Activated naive CD8-positive, alpha-beta T cell treated with anti-CD3 and anti-CD28 coated beads, Interleukin-2, amount 10 ng/mL, durations not matched to agents 7 days and 5 days (primary cell): ENCODE measurements at regions of chr18 and their contacts with region 1.

Region 1: GRCh38 chr18:12883684-12884405 is at the start of gene PTPN2:
- DNase-seq: peak; percentile 97
- ATAC-seq: peak; percentile 92
- H3K4me3 Mint-ChIP-seq: peak within 1 kb of the TSS; percentile 90
- H3K27ac Mint-ChIP-seq: peak within 1 kb of the TSS; percentile 96
- H3K4me1 Mint-ChIP-seq: peaks cover 52% of the 10 kb centered on the region
- H3K27me3 Mint-ChIP-seq: no peaks in the 10 kb centered on the region
- total RNA-seq, gene PTPN2: 64.9 to 68.1 TPM

Region 2: DNA sequence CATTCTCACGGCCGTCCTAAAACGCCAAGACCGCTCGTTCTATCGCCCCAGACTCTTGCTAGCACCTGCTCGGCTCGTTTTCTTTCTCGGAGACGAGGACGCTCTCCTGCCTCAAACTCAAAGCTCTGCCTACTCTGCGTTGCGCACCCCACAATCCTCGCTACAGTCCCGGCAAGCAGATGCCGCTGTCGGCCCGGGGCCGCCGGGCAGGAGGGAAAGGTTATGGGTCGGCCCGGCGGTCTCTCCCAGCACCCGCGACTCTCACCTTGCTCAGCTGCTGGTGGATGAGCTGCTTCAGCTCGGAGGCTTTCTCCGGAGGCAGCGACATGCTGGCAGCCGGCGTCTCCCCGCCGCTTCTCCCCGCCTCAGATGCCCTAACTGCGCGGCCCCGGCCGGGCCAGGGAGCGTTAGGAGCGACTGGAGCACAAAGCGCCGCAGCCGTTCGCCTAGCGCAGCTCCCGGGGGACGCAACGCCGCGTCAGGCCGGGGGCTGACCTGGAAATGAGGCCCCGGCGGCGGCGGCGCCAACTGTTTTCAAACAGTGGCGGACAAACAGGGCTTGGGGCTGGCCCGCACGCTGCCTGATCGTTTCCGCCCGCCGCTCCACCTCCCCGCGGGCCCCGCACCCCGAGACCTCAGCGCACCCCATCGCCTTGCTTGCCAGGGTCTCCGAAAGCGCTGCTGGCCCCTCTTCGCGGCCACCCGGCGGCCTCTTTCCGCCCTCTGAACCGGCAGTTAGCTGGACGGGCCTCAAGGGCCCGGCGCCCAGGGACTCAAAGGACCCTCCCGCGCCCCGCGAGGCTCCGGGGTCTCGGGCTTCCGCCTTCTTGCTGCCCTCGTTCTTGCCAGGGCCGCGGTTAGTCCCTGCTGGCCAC is 181.4 kb before region 1 on chr18 and contains the starts of genes CEP76 and PSMG2:
- POLR2A ChIA-PET with region 1: interaction called, 16 read pairs
- DNase-seq: peak; percentile 90
- ATAC-seq: peak; percentile 82
- H3K4me3 Mint-ChIP-seq: peak within 1 kb of the TSS; percentile 87
- H3K27ac Mint-ChIP-seq: peak within 1 kb of the TSS; percentile 95
- H3K4me1 Mint-ChIP-seq: peaks cover 38% of the 10 kb centered on the region
- H3K27me3 Mint-ChIP-seq: no peaks in the 10 kb centered on the region
- total RNA-seq, gene CEP76: 12.4 to 14.4 TPM
- total RNA-seq, gene PSMG2: 90.6 to 97.2 TPM

Region 3: GRCh38 chr18:12783524-12783923 is 100.3 kb before region 1 on chr18:
- POLR2A ChIA-PET with region 1: no interaction called
- DNase-seq: no peak
- ATAC-seq: no peak
- H3K4me3 Mint-ChIP-seq: no peak overlapping the region
- H3K27ac Mint-ChIP-seq: no peak overlapping the region
- H3K4me1 Mint-ChIP-seq: no peaks in the 10 kb centered on the region
- H3K27me3 Mint-ChIP-seq: no peaks in the 10 kb centered on the region

Region 4: DNA sequence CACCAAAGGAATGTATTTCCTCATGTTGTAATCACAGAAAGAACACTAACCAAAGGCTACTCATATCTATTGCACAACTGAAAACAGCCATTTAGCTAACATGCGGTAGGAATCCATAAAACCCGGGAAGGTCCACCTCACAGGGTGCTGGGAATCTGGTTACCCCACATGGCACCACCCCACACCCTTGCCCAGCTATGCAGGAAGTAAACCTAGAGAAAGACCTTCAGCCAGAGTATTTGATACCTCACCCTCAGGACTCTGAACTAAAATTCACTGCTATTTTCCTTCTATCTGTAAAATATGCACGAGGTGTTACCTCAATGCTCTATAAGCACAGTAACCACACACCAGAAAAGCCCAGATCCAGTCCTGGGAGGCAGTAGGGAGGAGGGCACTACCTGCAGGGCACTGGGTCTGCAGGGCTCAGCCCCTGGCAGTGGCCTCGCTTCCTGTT is 45.6 kb before region 1 on chr18:
- POLR2A ChIA-PET with region 1: interaction called, 28 read pairs
- DNase-seq: no peak
- ATAC-seq: no peak
- H3K4me3 Mint-ChIP-seq: peak overlapping the region; percentile 83
- H3K27ac Mint-ChIP-seq: peak overlapping the region; percentile 92
- H3K4me1 Mint-ChIP-seq: peaks cover 52% of the 10 kb centered on the region
- H3K27me3 Mint-ChIP-seq: no peaks in the 10 kb centered on the region

Region 5: GRCh38 chr18:12857215-12857905 is 26.5 kb before region 1 on chr18:
- POLR2A ChIA-PET with region 1: interaction called, 29 read pairs
- DNase-seq: no peak
- ATAC-seq: peak; percentile 60
- H3K4me3 Mint-ChIP-seq: peak overlapping the region; percentile 33
- H3K27ac Mint-ChIP-seq: peak overlapping the region; percentile 41
- H3K4me1 Mint-ChIP-seq: peaks cover 54% of the 10 kb centered on the region
- H3K27me3 Mint-ChIP-seq: no peaks in the 10 kb centered on the region

Region 6: DNA sequence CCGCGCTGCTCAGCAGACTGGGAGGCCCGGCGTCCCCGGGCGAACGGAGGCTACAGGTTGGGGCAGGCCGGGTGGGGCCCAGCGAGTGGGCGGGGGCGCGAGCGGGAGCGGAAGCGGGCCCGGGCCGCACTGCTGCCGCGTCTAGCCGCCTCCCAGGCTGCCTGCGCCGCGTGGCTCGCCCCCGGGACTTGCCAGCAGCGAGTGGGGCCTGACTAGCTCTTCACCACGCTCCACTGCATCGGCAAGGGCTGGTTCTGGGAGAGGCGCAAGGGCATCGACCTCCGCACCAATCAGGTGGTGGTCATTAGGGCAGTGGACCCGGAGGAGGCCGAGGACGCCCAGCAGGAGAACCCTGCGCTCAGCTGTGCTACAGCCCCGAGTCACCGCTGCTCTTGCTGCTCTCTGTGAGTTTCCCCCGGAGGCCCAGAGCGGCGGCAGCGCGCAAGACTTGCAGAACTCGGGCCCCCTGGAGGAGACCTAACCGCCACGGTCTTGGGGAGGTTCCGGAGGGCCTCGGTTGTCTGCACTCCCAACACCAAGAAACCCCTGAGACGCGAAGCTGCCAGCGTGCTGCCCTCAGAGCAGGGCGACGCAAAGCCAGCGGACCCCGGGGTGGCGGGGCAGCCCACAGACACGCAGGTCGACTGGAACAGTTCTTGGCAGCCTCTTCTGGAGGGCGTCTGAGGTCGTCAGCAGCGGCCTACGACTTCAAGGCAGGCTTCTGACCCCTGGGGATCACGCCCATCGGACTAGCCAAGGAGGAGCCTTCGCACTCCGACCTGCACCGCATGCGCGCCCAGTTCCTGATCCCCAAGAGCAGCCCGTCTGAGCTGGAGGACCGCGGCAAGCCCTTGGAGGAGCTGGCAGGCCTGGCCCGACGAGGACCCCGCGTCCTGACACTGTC is 27.4 kb after region 1 on chr18:
- POLR2A ChIA-PET with region 1: interaction called, 15 read pairs
- DNase-seq: peak; percentile 79
- ATAC-seq: peak; percentile 97
- H3K4me3 Mint-ChIP-seq: peak overlapping the region; percentile 64
- H3K27ac Mint-ChIP-seq: peak overlapping the region; percentile 38
- H3K4me1 Mint-ChIP-seq: peaks cover 4% of the 10 kb centered on the region
- H3K27me3 Mint-ChIP-seq: peaks cover 13% of the 10 kb centered on the region